Posterior cingulate gyrus (tissue), 11 donors: ENCODE measurements at regions of chr3 and their contacts with region 1.

Region 1: GRCh38 chr3:195744437-195744836 is 23.7 kb downstream of the MUC20 start:
- DNase-seq: no peak

Region 2: GRCh38 chr3:194941761-194942483 is 802.5 kb before region 1 on chr3:
- intact Hi-C with region 1: no loop called
- DNase-seq: no peak

Region 3: DNA sequence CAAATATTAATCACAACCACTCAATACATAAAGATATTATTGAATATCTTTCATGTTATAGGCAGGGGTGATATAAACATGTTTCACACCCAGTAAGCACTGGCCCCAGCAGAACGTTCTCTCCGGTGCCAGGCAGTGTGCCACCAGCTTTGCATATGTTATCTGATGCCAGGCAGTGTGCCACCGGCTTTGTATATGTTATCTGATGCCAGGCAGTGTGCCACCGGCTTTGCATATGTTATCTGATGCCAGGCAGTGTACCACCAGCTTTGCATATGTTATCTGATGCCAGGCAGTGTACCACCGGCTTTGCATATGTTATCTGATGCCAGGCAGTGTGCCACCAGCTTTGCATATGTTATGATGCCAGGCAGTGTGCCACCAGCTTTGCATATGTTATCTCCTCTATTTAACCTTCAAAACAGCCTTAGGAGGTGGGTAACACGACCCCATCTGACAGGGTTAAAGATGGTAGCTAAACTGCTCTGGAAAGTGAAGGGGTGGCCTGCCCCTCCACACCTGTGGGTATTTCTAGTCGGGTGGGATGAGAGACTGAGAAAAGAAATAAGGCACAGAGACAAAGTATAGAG is 16.7 kb before region 1 on chr3:
- intact Hi-C with region 1: loop called (anchors 2 kb)
- DNase-seq: peak in 6 of 10 donors; percentile 18 to 90 (median 70)